ENCODE measurements at regions of chr5 and their contacts with region 1.

Region 1: DNA sequence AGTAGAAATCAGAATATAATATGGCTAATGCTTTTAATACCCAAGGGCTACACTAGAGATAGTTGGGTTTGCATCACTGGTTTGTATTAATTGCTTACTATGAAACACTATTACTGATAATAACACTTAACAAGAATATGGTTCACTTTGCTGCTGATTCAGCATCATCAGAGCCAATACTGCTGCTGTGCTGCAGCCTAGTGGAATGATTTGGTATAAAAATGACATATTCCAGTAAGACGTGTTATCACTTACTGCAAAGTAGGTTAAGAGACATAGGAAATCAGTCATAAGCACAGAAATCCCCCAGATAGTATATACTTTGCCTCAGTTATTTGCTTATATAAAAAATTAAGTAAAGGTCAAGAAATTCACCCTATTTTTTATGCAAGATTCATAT is 2.8 kb downstream of the CDH10 start:
- DNase-seq: peak; percentile 54
- H3K4me3 Mint-ChIP-seq: no peak overlapping the region
- H3K27ac Mint-ChIP-seq: no peak overlapping the region
- H3K4me1 Mint-ChIP-seq: peaks cover 26% of the 10 kb centered on the region
- H3K27me3 Mint-ChIP-seq: no peaks in the 10 kb centered on the region
- CTCF ChIP-seq: peak; percentile 42

Region 2: GRCh38 chr5:24232929-24233498 is 409.0 kb before region 1 on chr5:
- CTCF ChIA-PET with region 1: no interaction called
- POLR2A ChIA-PET with region 1: no interaction called
- intact Hi-C with region 1: loop called (anchors 1 kb)
- DNase-seq: peak; percentile 2
- H3K4me3 Mint-ChIP-seq: no peak overlapping the region
- H3K27ac Mint-ChIP-seq: no peak overlapping the region
- H3K4me1 Mint-ChIP-seq: no peaks in the 10 kb centered on the region
- H3K27me3 Mint-ChIP-seq: no peaks in the 10 kb centered on the region
- CTCF ChIP-seq: peak; percentile 38

Region 3: DNA sequence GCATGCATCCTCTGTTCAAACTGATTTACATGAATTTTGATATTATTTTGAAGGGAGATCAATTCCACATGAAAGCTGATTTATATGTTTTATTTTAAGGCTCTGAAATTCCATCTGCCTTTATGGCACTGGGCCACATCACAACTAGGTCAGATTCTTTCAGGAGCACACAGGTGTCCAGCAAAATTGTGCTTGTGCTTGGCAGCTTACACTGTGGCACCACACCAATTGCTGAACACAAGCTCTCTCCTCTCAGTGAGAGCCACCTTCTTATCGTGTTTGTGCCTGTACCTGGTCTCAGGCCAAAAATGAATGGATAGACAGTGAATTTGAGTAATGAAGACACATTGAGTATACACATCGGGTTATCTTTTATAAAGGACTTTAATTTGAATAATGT is 197.6 kb before region 1 on chr5:
- CTCF ChIA-PET with region 1: no interaction called
- POLR2A ChIA-PET with region 1: interaction called, 3 read pairs
- intact Hi-C with region 1: loop called (anchors 2 kb)
- DNase-seq: no peak
- H3K4me3 Mint-ChIP-seq: no peak overlapping the region
- H3K27ac Mint-ChIP-seq: no peak overlapping the region
- H3K4me1 Mint-ChIP-seq: peaks cover 6% of the 10 kb centered on the region
- H3K27me3 Mint-ChIP-seq: no peaks in the 10 kb centered on the region
- CTCF ChIP-seq: no peak

Region 4: DNA sequence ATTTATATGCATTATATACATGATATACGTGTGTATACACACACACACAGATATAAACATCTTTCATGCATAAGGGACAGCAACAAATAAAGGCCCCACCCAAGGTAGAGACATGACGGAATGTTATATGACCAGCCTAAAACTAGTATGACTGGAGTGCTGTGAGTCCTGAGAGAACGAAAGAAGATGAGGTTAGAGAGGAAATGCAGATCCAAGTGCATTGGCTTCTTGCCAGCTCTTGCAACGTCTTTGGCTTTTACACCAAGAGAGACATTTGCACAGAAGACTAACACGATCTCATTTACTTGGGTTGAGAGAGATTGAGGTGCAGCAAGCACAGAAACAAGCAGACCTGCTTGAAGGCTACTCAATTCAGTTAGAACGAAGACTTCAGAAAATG is 20.2 kb before region 1 on chr5:
- CTCF ChIA-PET with region 1: no interaction called
- POLR2A ChIA-PET with region 1: no interaction called
- intact Hi-C with region 1: no loop called
- DNase-seq: peak; percentile 67
- H3K4me3 Mint-ChIP-seq: no peak overlapping the region
- H3K27ac Mint-ChIP-seq: no peak overlapping the region
- H3K4me1 Mint-ChIP-seq: peaks cover 8% of the 10 kb centered on the region
- H3K27me3 Mint-ChIP-seq: no peaks in the 10 kb centered on the region
- CTCF ChIP-seq: no peak

Region 5: GRCh38 chr5:25006737-25007302 is 364.8 kb after region 1 on chr5:
- CTCF ChIA-PET with region 1: interaction called, 7 read pairs
- POLR2A ChIA-PET with region 1: interaction called, 3 read pairs
- intact Hi-C with region 1: loop called (anchors 1 kb)
- DNase-seq: peak; percentile 70
- H3K4me3 Mint-ChIP-seq: no peak overlapping the region
- H3K27ac Mint-ChIP-seq: no peak overlapping the region
- H3K4me1 Mint-ChIP-seq: no peaks in the 10 kb centered on the region
- H3K27me3 Mint-ChIP-seq: no peaks in the 10 kb centered on the region
- CTCF ChIP-seq: peak; percentile 44

Measured in MCF 10A (cell line).